ENCODE measurements at regions of chr16 and their contacts with region 1.

Region 1: DNA sequence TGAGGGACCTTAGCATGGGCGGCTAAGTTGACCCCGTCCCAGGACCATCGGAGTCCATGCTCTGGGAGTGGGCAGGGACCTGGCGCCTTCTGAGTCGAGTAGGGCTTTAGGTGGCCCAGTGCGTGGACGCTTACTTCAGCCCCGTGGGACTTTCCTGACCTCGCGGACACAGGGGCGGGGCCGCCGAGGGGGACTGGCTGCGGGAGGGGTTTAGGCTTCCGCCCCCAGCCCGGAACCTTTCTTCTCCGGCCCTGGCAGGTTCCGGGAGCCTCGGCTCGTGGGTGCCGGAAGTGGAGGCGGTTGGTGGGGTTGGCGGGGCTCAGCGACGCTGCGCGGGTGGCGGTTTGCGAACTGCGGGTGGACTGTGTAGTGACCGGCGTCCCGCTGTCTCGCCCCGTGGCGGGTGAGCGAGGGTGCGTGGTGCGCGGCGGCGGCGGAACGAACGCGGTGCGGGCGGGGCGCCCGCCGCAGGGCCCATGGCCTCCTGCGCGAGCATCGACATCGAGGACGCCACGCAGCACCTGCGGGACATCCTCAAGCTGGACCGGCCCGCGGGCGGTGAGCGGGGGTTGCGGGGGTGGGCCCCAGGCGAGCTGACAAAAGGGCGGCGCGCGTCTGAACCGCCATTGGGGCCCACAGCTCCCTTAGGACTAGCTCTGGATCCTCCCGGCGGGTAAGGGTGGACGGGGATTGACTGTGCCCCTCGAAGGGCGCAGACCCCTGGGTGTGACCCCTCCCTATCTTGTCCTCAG is at the start of gene EDC4:
- DNase-seq: peak; percentile 78
- ATAC-seq: peak; percentile 91
- H3K4me3 ChIP-seq: peak within 1 kb of the TSS; percentile 89
- H3K27ac ChIP-seq: peak within 1 kb of the TSS; percentile 82
- H3K4me1 ChIP-seq: peaks cover 10% of the 10 kb centered on the region
- H3K27me3 ChIP-seq: no peaks in the 10 kb centered on the region
- CTCF ChIP-seq: no peak; the same call in 1 of the 2 replicates
- POLR2A ChIP-seq: peak; percentile 73
- RAD21 ChIP-seq: no peak; the same call in 1 of the 2 replicates
- total RNA-seq, gene EDC4: 33.2 and 34.2 TPM in 2 replicates

Region 2: GRCh38 chr16:67841764-67842508 is 31.0 kb before region 1 on chr16 and contains the start of gene THAP11:
- CTCF ChIA-PET with region 1: no interaction called
- POLR2A ChIA-PET with region 1: no interaction called
- dilution Hi-C with region 1: no loop called
- in situ Hi-C with region 1: no loop called
- intact Hi-C with region 1: loop called (anchors 2 kb)
- DNase-seq: peak; percentile 92
- ATAC-seq: peak; percentile 67
- H3K4me3 ChIP-seq: peak within 1 kb of the TSS; percentile 69
- H3K27ac ChIP-seq: peak within 1 kb of the TSS; percentile 91
- H3K4me1 ChIP-seq: peaks cover 13% of the 10 kb centered on the region
- H3K27me3 ChIP-seq: no peaks in the 10 kb centered on the region
- CTCF ChIP-seq: peak; percentile 96
- POLR2A ChIP-seq: peak; percentile 52; the same call in 1 of the 2 replicates
- RAD21 ChIP-seq: peak; percentile 50
- total RNA-seq, gene THAP11: 13.3 and 13.9 TPM in 2 replicates

Region 3: GRCh38 chr16:68031951-68032350 is 159.0 kb after region 1 on chr16:
- CTCF ChIA-PET with region 1: no interaction called
- POLR2A ChIA-PET with region 1: interaction called, 16 read pairs
- dilution Hi-C with region 1: no loop called
- in situ Hi-C with region 1: no loop called
- intact Hi-C with region 1: no loop called
- DNase-seq: no peak
- ATAC-seq: no peak
- H3K4me3 ChIP-seq: no peak overlapping the region
- H3K27ac ChIP-seq: no peak overlapping the region
- H3K4me1 ChIP-seq: no peaks in the 10 kb centered on the region
- H3K27me3 ChIP-seq: no peaks in the 10 kb centered on the region
- CTCF ChIP-seq: no peak
- POLR2A ChIP-seq: no peak
- RAD21 ChIP-seq: no peak